HCT116 (cell line): ENCODE measurements at regions of chr21 and their contacts with region 1.

Region 1: GRCh38 chr21:29372063-29372802 is 73.5 kb downstream of the BACH1 start:
- DNase-seq: peak; percentile 67
- ATAC-seq: peak; percentile 88
- H3K4me3 ChIP-seq: no peak overlapping the region
- H3K27ac ChIP-seq: no peak overlapping the region
- H3K4me1 ChIP-seq: no peaks in the 10 kb centered on the region
- H3K27me3 ChIP-seq: no peaks in the 10 kb centered on the region
- CTCF ChIP-seq: peak; percentile 59 to 82 (median 61); a peak in 5 of 6 replicates
- POLR2A ChIP-seq: no peak
- RAD21 ChIP-seq: peak; percentile 77

Region 2: GRCh38 chr21:29360799-29361765 is 11.2 kb before region 1 on chr21:
- CTCF ChIA-PET with region 1: interaction called, 16 read pairs
- POLR2A ChIA-PET with region 1: no interaction called
- RAD21 ChIA-PET with region 1: interaction called in 1 of 2 experiments, 3 read pairs
- intact Hi-C with region 1: no loop called
- DNase-seq: no peak
- ATAC-seq: no peak
- H3K4me3 ChIP-seq: no peak overlapping the region
- H3K27ac ChIP-seq: no peak overlapping the region
- H3K4me1 ChIP-seq: no peaks in the 10 kb centered on the region
- H3K27me3 ChIP-seq: no peaks in the 10 kb centered on the region
- CTCF ChIP-seq: no peak; a peak in 1 of 6 replicates
- POLR2A ChIP-seq: no peak
- RAD21 ChIP-seq: peak; percentile 23; the same call in 1 of the 2 replicates